ENCODE measurements at regions of chr17 and their contacts with region 1.

Region 1: DNA sequence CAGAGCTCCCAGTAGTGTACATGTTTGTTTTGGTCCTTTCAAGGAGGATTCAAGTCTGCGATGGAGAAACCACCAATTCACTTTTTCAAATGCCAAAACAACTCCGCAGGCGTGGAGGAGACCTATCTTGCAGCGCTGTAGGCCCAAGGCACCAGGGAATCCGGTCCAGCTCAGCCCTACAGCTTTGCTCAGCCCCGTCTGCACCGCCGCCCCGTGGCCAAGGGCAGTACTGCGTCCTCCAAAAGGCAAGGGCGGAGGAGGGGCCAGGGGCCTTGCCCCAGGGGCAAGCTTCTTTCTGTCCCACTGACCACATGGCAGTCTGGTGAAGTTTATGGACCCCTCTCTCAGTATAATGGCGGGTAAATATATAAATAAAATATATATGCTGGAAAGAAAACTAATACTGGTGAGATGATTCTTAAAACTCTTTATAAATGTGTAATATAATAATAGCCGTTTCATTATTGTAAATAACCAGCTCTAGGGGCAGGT is 709 bp upstream of the CD300LG start:
- DNase-seq: peak; percentile 87 to 91
- ATAC-seq: peak; percentile 91 to 97 (median 94)
- H3K4me3 ChIP-seq: peak overlapping the region in 4 of 10 donors; percentile 34 to 55 (median 50)
- H3K27ac ChIP-seq: peak overlapping the region in 9 of 10 donors; percentile 42 to 85 (median 75)
- H3K4me1 ChIP-seq: peaks cover 0 to 34% (median 7%) of the 10 kb centered on the region in 9 donors
- H3K27me3 ChIP-seq: no peaks in the 10 kb centered on the region
- CTCF ChIP-seq: peak; percentile 95 to 99 (median 99)

Region 2: DNA sequence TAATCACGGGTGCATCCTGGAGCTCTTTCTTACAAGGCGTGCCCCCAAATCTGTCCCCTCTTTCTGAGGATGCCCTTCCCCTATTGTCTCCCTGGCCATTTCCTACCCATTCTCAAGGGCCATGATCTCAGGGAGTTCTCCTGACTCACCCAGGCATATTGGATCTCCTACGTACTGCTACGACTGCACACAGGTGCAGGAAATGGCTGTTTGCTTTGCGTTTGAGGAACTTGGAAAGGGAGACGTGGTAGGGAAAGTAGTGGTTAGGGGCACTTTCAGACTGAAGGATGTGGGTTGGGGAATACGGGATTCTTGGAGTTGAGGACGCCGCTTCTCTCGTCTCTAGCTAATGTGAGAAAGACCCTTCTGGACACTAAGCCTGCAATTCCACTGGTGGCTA is 165.8 kb before region 1 on chr17:
- intact Hi-C with region 1: loop called in 1 of 10 experiments (anchors 10 kb)
- DNase-seq: no peak
- ATAC-seq: no peak
- H3K4me3 ChIP-seq: no peak overlapping the region
- H3K27ac ChIP-seq: no peak overlapping the region
- H3K4me1 ChIP-seq: peaks cover 0 to 25% (median 5%) of the 10 kb centered on the region in 9 donors
- H3K27me3 ChIP-seq: no peaks in the 10 kb centered on the region
- CTCF ChIP-seq: no peak

Region 3: DNA sequence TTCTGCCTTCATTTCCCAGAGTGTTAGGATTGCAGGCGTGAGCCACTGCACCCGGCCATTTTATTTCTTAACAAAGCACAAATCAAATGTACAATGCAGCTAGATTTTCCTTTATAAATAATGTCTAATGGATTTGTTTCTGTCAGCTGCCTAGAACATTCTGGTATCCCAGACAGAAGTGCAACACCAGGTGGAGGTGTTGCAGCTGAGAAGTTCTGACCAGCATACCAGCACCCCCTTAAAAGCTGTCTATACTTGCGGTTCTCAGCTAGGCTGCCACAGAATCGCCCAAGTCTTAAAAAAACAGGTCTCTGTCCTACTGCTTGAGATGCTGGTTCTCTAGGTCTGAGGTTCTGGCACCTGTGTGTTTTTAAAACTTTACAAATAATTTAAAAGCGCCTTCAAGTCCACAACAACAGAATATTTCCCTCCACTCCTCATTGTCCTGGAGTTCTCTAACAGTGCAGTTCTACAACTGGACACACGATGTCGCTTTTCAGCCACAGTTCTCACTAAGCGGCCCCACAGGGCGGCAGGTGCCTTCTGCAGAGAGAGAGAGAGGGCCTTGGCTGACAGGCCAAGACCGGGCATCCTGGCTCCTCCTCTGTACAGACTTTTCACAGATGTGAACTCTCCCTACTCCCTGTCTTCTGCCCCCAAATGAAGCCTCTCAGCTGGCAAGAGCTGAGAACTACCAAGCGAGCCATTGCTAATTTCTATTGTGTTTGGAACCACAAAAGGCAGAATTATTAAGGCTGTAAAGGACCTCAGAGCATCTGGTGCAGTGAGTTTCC is 152.0 kb before region 1 on chr17:
- intact Hi-C with region 1: loop called in 7 of 10 experiments (anchors 5 to 10 kb)
- DNase-seq: peak; percentile 61 to 79
- ATAC-seq: peak; percentile 63 to 87 (median 80)
- H3K4me3 ChIP-seq: no peak overlapping the region
- H3K27ac ChIP-seq: no peak overlapping the region
- H3K4me1 ChIP-seq: peaks cover 3 to 17% (median 14%) of the 10 kb centered on the region in 9 donors
- H3K27me3 ChIP-seq: no peaks in the 10 kb centered on the region
- CTCF ChIP-seq: peak; percentile 74 to 98 (median 95)

Region 4: GRCh38 chr17:43766413-43767052 is 79.7 kb before region 1 on chr17:
- intact Hi-C with region 1: loop called in 1 of 10 experiments (anchors 5 kb)
- DNase-seq: peak; percentile 39 to 47
- ATAC-seq: peak in 1 of 8 donors; percentile 37
- H3K4me3 ChIP-seq: no peak overlapping the region
- H3K27ac ChIP-seq: peak overlapping the region in 2 of 10 donors; percentile 61 to 76
- H3K4me1 ChIP-seq: peaks cover 13 to 66% (median 30%) of the 10 kb centered on the region in 9 donors
- H3K27me3 ChIP-seq: no peaks in the 10 kb centered on the region
- CTCF ChIP-seq: peak; percentile 46 to 88 (median 81)

Region 5: DNA sequence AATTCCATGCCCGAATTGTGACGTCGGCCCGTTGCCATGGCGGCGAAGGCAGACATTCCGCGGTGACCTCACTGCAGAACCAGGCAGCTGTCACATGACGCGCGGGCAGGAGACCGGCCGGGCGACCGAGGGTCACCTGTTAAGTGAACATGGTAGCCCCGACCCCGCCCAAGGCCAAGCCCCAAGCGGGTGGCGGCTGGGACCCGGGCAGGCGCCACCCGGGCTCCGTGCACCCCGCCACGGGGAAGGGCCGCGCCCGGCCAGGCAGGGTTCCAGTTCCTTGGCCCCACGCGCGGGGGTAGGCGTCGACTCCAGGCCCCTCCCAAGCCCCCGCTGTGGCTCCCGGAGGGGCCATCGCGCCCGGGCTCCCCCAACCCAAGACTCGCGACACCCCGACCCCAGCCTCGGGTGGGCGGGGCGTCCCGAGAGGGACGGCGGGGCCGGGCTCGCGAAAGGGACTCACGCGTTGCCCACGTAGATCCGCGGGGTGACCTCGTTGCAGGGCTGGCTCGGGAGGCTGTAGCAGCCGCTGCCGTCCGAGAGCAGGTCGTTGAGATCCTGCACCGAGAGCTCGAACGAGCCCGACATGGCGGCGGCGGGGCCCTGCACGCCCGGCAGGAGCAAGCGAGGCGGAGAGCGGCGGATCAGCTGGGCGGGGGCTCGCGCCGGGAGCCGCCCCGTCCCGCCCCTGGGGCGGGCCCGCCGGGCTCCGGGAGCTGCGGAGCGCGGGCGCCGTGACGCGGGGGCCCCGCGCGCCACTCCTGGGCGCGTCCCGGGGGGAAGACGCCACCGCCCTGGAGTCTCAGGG is 67.7 kb before region 1 on chr17 and contains the start of gene DUSP3:
- intact Hi-C with region 1: loop called in 4 of 10 experiments (anchors 5 to 10 kb)
- DNase-seq: peak; percentile 95 to 96
- ATAC-seq: peak; percentile 87 to 96 (median 90)
- H3K4me3 ChIP-seq: peak within 1 kb of the TSS; percentile 70 to 100 (median 93)
- H3K27ac ChIP-seq: peak within 1 kb of the TSS; percentile 96 to 100 (median 100)
- H3K4me1 ChIP-seq: peaks cover 2 to 69% (median 41%) of the 10 kb centered on the region in 9 donors
- H3K27me3 ChIP-seq: no peaks in the 10 kb centered on the region
- CTCF ChIP-seq: peak in 1 of 9 donors; percentile 6
- total RNA-seq, gene DUSP3: 222 to 359 (median 297) TPM

Measured in heart right ventricle (tissue), 16 donors.